ENCODE measurements at regions of chrX and their contacts with region 1.

Region 1: GRCh38 chrX:790041-790506 is 159.5 kb downstream of the SHOX start:
- DNase-seq: no peak
- H3K4me3 ChIP-seq: no peak overlapping the region
- H3K27ac ChIP-seq: no peak overlapping the region
- H3K4me1 ChIP-seq: no peaks in the 10 kb centered on the region
- H3K27me3 ChIP-seq: peaks cover 0 to 30% of the 10 kb centered on the region in 2 donors
- CTCF ChIP-seq: no peak
- POLR2A ChIP-seq: no peak

Region 2: DNA sequence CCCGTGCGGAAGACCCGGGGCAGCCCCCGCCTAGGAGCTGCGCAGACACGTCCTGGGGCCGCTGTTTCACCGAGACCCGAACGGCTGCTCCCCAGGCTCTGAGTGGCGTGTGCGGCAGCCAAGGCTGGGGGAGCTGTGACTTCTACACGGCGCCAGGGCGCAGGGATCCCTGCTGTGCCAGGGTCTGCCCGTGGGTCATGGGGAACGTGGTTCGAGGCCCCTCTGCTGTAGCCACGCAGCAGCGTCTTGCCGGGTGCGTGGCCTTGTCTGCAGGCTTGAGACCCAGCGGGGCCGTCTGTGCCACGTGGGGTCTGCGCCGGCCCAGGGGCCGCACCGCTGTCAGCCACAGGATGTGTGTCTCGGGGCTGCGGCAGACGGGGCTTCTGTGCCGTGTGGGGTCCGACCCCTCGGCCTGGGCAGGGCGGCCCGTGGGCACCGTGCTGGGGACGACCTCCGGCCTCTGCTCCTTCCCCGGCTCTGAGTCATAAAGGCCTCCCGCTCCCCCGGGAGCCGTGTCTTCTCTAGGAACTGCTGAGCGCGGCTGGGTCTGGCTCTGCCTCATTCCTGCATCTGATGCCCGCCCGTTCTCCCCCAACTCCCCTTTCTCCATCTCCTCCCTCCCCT is 458.8 kb before region 1 on chrX:
- intact Hi-C with region 1: no loop called
- DNase-seq: no peak
- H3K4me3 ChIP-seq: peak overlapping the region in 2 of 3 donors; percentile 16 to 54
- H3K27ac ChIP-seq: no peak overlapping the region
- H3K4me1 ChIP-seq: no peaks in the 10 kb centered on the region
- H3K27me3 ChIP-seq: peaks cover 7 to 15% of the 10 kb centered on the region in 2 donors
- CTCF ChIP-seq: no peak
- POLR2A ChIP-seq: no peak

Region 3: GRCh38 chrX:750263-750662 is 39.8 kb before region 1 on chrX:
- intact Hi-C with region 1: no loop called
- DNase-seq: no peak
- H3K4me3 ChIP-seq: no peak overlapping the region
- H3K27ac ChIP-seq: no peak overlapping the region
- H3K4me1 ChIP-seq: no peaks in the 10 kb centered on the region
- H3K27me3 ChIP-seq: no peaks in the 10 kb centered on the region
- CTCF ChIP-seq: no peak
- POLR2A ChIP-seq: no peak

Region 4: GRCh38 chrX:905848-906566 is 115.9 kb after region 1 on chrX:
- intact Hi-C with region 1: no loop called
- DNase-seq: no peak
- H3K4me3 ChIP-seq: no peak overlapping the region
- H3K27ac ChIP-seq: no peak overlapping the region
- H3K4me1 ChIP-seq: no peaks in the 10 kb centered on the region
- H3K27me3 ChIP-seq: no peaks in the 10 kb centered on the region
- CTCF ChIP-seq: no peak
- POLR2A ChIP-seq: no peak

Region 5: DNA sequence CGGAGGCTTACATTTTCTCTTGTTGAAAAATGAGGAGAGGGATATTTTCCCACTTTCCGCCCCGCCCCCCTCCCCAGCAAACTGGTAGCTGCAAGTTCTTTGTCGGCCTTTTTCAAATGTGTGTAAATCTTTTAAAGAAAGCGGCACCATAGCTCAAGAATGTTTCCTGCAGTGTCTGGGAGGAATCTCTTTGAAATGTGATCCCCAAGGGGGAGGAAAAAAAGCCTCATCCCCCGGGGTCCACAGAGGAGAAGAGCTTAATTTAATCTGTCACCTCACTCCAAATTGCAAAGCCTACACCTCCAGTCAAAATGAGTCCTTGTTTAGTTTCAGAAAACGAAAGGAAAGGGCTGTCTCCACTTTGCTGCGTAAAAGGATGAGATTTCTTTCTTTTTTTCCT is 859.5 kb after region 1 on chrX:
- intact Hi-C with region 1: loop called (anchors 5 kb)
- DNase-seq: no peak
- H3K4me3 ChIP-seq: no peak overlapping the region
- H3K27ac ChIP-seq: no peak overlapping the region
- H3K4me1 ChIP-seq: no peaks in the 10 kb centered on the region
- H3K27me3 ChIP-seq: no peaks in the 10 kb centered on the region
- CTCF ChIP-seq: no peak
- POLR2A ChIP-seq: no peak

Measured in breast epithelium (tissue), 4 donors.